CD8-positive, alpha-beta memory T cell (primary cell): ENCODE measurements at regions of chr5 and their contacts with region 1.

Region 1: DNA sequence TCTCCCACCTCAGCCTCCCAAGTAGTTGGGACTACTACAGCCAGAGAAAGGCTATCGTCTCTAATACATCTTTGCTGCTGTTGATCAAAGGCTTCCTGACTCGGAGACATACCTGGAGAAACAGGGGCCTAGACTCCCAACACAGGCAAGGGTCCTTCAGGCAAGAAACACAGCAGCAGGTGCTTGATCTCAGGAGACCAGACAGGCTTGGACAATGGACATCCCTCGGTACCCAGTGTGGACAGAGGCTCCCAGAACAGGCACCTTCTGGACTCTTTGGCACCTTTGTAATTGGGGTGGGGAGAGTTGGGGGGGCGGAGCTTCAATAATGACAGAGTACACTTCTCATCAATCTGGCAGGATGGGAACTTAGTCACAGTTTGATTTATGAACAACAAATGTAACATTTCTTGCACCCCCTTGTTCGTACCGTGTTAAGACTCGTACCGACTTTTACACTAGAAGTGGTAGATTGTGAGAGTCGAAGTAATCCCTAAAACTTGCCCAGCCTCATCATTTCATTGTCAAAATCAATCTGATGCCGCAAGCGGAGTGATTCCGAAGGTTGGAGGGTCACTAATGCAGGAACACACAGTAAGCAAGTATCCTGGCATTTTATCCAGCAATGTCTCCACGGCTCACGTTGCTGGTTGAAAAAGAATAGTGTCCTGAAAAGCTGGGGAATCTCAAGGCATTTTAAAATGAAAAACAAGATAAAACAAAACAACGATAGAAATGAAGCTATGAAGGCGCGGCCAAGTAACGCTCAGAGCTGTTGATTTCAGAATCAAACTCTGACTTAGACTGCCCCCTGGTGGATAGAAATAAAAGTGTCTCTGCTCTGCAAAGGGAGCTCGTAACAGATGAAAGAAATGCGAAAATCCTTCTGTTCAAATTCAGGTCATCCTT is 46.4 kb upstream of the STK32A start:
- DNase-seq: peak; percentile 4 to 54 (median 43)
- H3K4me3 ChIP-seq: no peak overlapping the region
- H3K4me3 Mint-ChIP-seq: peak overlapping the region in 3 of 7 donors; percentile 26 to 41 (median 33)
- H3K27ac ChIP-seq: no peak overlapping the region
- H3K27ac Mint-ChIP-seq: peak overlapping the region in 1 of 8 donors; percentile 61
- H3K4me1 ChIP-seq: no peaks in the 10 kb centered on the region
- H3K4me1 Mint-ChIP-seq: peaks cover 3 to 8% (median 7%) of the 10 kb centered on the region in 3 donors
- H3K27me3 ChIP-seq: no peaks in the 10 kb centered on the region
- H3K27me3 Mint-ChIP-seq: peaks cover 15 to 26% of the 10 kb centered on the region in 2 donors

Region 2: GRCh38 chr5:146533260-146533857 is 655.1 kb before region 1 on chr5:
- CTCF ChIA-PET with region 1: interaction called, 26 read pairs
- POLR2A ChIA-PET with region 1: no interaction called
- DNase-seq: peak; percentile 45 to 81 (median 51)
- H3K4me3 ChIP-seq: no peak overlapping the region
- H3K4me3 Mint-ChIP-seq: no peak overlapping the region
- H3K27ac ChIP-seq: no peak overlapping the region
- H3K27ac Mint-ChIP-seq: peak overlapping the region in 1 of 8 donors; percentile 78
- H3K4me1 ChIP-seq: no peaks in the 10 kb centered on the region
- H3K4me1 Mint-ChIP-seq: peaks cover 3 to 5% (median 4%) of the 10 kb centered on the region in 3 donors
- H3K27me3 ChIP-seq: no peaks in the 10 kb centered on the region
- H3K27me3 Mint-ChIP-seq: peaks cover under 1 to 3% of the 10 kb centered on the region in 2 donors

Region 3: DNA sequence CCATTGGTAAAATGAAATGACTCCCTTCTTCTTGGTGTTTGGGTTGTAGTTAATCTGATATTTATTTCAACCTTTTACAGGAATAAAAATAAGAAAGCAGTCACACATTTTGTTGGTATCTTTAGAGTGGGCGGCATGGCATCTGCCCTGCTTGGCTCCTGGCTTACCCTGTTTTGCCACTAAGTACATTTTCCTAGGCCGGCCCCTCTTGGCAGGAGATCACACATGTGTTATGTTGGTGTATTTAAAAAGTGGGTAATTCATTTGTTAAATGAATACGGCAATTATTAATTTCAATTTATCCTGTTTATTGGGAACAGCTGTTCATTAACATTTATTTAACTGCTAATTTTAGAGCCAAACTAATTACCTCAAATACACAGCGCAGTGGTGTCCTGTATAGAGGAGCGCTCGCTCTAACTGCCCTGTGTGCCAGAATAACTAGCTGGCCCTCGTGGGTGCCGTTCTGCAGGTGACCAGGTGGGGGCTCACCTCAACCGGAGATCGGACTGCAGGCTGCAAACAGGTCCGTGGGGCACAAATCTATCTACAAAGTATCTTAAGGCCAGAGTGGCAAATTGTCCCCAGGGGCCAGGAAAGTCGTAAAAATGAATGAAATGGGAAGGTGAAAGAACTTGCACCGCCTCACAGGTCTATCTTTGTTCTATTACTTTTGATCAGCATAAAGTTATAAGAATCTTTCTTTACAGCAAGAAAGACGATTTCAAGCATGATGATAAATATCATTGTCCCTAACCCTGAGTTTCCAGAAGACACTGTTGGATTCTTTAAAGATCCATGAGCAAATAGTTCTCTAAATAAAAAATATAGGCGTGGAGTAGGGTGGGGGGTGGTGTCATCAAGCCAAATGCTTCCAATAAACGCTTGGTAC is 646.2 kb before region 1 on chr5:
- CTCF ChIA-PET with region 1: interaction called, 24 read pairs
- POLR2A ChIA-PET with region 1: no interaction called
- DNase-seq: peak; percentile 48 to 73 (median 52)
- H3K4me3 ChIP-seq: no peak overlapping the region
- H3K4me3 Mint-ChIP-seq: no peak overlapping the region
- H3K27ac ChIP-seq: no peak overlapping the region
- H3K27ac Mint-ChIP-seq: no peak overlapping the region
- H3K4me1 ChIP-seq: no peaks in the 10 kb centered on the region
- H3K4me1 Mint-ChIP-seq: peaks cover 0 to 2% (median 0%) of the 10 kb centered on the region in 3 donors
- H3K27me3 ChIP-seq: no peaks in the 10 kb centered on the region
- H3K27me3 Mint-ChIP-seq: no peaks in the 10 kb centered on the region

Region 4: GRCh38 chr5:147177125-147177840 is 11.2 kb before region 1 on chr5:
- CTCF ChIA-PET with region 1: interaction called, 20 read pairs
- POLR2A ChIA-PET with region 1: no interaction called
- DNase-seq: no peak
- H3K4me3 ChIP-seq: no peak overlapping the region
- H3K4me3 Mint-ChIP-seq: no peak overlapping the region
- H3K27ac ChIP-seq: no peak overlapping the region
- H3K27ac Mint-ChIP-seq: no peak overlapping the region
- H3K4me1 ChIP-seq: no peaks in the 10 kb centered on the region
- H3K4me1 Mint-ChIP-seq: no peaks in the 10 kb centered on the region
- H3K27me3 ChIP-seq: no peaks in the 10 kb centered on the region
- H3K27me3 Mint-ChIP-seq: peaks cover 1 to 13% of the 10 kb centered on the region in 2 donors

Region 5: DNA sequence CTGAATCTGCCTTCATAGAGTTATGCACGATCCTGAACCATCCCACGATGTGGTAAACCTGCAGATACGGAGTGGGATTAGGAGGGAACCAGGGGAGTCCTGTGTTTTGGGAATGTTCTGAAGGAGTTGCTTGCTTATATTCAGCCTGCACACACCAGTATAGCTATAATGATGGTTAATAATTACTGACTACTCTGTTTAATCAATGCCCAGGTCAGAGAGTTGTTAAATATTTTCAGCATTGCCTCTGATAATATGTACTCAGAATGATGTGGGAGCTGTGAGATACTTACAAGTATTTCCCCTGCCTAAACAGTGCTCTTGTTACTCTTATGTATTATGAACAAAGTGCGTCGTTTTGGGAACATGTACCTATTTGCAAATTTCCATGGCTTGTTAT is 11.5 kb after region 1 on chr5:
- CTCF ChIA-PET with region 1: interaction called, 22 read pairs
- POLR2A ChIA-PET with region 1: no interaction called
- DNase-seq: no peak
- H3K4me3 ChIP-seq: no peak overlapping the region
- H3K4me3 Mint-ChIP-seq: no peak overlapping the region
- H3K27ac ChIP-seq: no peak overlapping the region
- H3K27ac Mint-ChIP-seq: no peak overlapping the region
- H3K4me1 ChIP-seq: no peaks in the 10 kb centered on the region
- H3K4me1 Mint-ChIP-seq: no peaks in the 10 kb centered on the region
- H3K27me3 ChIP-seq: no peaks in the 10 kb centered on the region
- H3K27me3 Mint-ChIP-seq: peaks cover 7 to 11% of the 10 kb centered on the region in 2 donors